WTC11 (cell line): ENCODE measurements at regions of chr18 and their contacts with region 1.

Region 1: DNA sequence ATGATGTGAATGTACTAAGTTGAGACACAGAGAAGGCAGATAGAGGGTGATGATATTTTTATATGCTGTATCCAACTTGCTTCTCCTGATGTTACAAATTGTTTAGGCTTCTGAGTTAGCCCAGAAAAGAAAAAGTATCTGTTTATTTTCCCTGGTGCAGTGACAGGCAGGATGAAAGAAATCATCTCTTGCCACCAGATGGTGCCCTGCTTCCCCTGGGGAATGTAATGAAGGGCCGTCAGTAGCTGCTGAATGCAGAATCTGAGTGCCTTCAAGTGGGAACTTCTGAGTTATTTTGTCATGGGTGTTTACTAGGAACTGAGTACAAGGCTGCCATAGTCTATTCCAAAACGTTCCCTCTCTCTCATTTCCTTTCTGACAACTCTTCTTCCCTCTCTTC is 525.6 kb downstream of the MBD2 start:
- DNase-seq: peak; percentile 52
- ATAC-seq: peak; percentile 96
- H3K4me3 Mint-ChIP-seq: no peak overlapping the region
- H3K27ac Mint-ChIP-seq: no peak overlapping the region
- H3K4me1 Mint-ChIP-seq: peaks cover 7% of the 10 kb centered on the region
- H3K27me3 Mint-ChIP-seq: no peaks in the 10 kb centered on the region
- CTCF ChIP-seq: 0 out of 2 replicates have a peak, but pooled peaks have one; percentile 29

Region 2: GRCh38 chr18:54119524-54120019 is 420.7 kb after region 1 on chr18:
- CTCF ChIA-PET with region 1: interaction called, 35 read pairs
- POLR2A ChIA-PET with region 1: no interaction called
- DNase-seq: no peak
- ATAC-seq: peak; percentile 58
- H3K4me3 Mint-ChIP-seq: peak overlapping the region; percentile 54
- H3K27ac Mint-ChIP-seq: no peak overlapping the region; the same call in 1 of the 2 replicates
- H3K4me1 Mint-ChIP-seq: peaks cover 38% of the 10 kb centered on the region
- H3K27me3 Mint-ChIP-seq: no peaks in the 10 kb centered on the region
- CTCF ChIP-seq: peak; percentile 70

Region 3: GRCh38 chr18:54127759-54128378 is 429.0 kb after region 1 on chr18:
- CTCF ChIA-PET with region 1: interaction called, 16 read pairs
- POLR2A ChIA-PET with region 1: no interaction called
- DNase-seq: peak; percentile 58
- ATAC-seq: peak; percentile 88
- H3K4me3 Mint-ChIP-seq: no peak overlapping the region
- H3K27ac Mint-ChIP-seq: no peak overlapping the region
- H3K4me1 Mint-ChIP-seq: peaks cover 45% of the 10 kb centered on the region
- H3K27me3 Mint-ChIP-seq: no peaks in the 10 kb centered on the region
- CTCF ChIP-seq: peak; percentile 39; the same call in 1 of the 2 replicates